WTC11 (cell line): ENCODE measurements at regions of chr3 and their contacts with region 1.

Region 1: GRCh38 chr3:18847583-18848197 is 300.6 kb upstream of the KCNH8 start:
- DNase-seq: no peak
- ATAC-seq: peak; percentile 69
- H3K4me3 Mint-ChIP-seq: no peak overlapping the region
- H3K27ac Mint-ChIP-seq: no peak overlapping the region
- H3K4me1 Mint-ChIP-seq: peaks cover 34% of the 10 kb centered on the region
- H3K27me3 Mint-ChIP-seq: no peaks in the 10 kb centered on the region
- CTCF ChIP-seq: peak; percentile 60

Region 2: DNA sequence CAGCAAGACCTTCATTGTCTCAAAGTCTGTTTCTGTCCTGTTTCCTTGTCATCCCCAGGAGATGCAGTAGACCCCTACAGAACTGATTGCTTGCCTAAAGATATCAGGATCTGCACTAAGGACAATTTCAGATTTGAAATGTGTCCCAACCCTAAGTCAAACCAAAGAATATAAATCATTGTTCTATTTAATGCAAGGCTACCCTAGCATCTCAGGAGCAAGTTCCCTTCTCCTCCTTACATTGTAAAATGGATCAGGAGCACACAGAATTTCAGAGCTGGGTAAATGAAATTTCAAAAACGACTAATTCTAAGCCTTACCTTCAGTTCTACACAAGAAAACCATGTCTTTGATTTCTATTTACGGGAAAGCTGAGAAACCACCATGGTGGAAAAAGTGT is 60.2 kb before region 1 on chr3:
- CTCF ChIA-PET with region 1: no interaction called
- POLR2A ChIA-PET with region 1: no interaction called
- DNase-seq: no peak
- ATAC-seq: no peak
- H3K4me3 Mint-ChIP-seq: no peak overlapping the region
- H3K27ac Mint-ChIP-seq: no peak overlapping the region
- H3K4me1 Mint-ChIP-seq: no peaks in the 10 kb centered on the region
- H3K27me3 Mint-ChIP-seq: no peaks in the 10 kb centered on the region
- CTCF ChIP-seq: no peak

Region 3: DNA sequence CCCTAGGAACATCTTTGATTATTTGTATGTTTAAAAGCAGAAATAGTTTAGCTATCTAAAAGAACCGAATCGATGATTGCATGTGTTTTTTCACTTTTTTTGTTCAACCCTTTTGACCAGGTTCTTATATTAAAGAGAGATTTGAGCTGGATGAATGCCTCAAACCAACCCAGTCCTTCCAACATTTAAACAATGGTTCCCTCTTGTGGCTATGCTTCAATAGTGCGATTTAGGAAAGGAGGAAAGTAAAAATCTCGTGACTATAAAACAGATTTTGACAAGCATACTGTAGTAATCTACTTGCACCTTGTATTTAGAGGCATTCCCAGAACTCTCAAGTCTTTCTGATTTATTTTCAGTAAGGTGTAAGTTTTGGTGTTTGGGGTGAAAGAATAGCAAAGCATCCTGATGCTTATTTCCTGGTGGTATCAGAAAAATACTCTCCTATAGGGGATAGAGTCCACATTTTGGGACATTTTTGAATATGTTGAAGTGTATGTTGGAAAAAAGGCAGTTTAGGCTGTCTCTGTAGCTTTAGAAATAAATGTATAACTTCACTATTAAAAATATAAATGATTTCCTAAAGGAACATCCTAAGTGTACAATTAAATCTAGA is 141.0 kb after region 1 on chr3:
- CTCF ChIA-PET with region 1: interaction called, 31 read pairs
- POLR2A ChIA-PET with region 1: no interaction called
- DNase-seq: no peak
- ATAC-seq: peak; percentile 51
- H3K4me3 Mint-ChIP-seq: no peak overlapping the region
- H3K27ac Mint-ChIP-seq: no peak overlapping the region; the same call in 1 of the 2 replicates
- H3K4me1 Mint-ChIP-seq: peaks cover 75% of the 10 kb centered on the region
- H3K27me3 Mint-ChIP-seq: no peaks in the 10 kb centered on the region
- CTCF ChIP-seq: peak; percentile 38